Right ventricle myocardium inferior (tissue), 1 donor: ENCODE measurements at regions of chr7 and their contacts with region 1.

Region 1: DNA sequence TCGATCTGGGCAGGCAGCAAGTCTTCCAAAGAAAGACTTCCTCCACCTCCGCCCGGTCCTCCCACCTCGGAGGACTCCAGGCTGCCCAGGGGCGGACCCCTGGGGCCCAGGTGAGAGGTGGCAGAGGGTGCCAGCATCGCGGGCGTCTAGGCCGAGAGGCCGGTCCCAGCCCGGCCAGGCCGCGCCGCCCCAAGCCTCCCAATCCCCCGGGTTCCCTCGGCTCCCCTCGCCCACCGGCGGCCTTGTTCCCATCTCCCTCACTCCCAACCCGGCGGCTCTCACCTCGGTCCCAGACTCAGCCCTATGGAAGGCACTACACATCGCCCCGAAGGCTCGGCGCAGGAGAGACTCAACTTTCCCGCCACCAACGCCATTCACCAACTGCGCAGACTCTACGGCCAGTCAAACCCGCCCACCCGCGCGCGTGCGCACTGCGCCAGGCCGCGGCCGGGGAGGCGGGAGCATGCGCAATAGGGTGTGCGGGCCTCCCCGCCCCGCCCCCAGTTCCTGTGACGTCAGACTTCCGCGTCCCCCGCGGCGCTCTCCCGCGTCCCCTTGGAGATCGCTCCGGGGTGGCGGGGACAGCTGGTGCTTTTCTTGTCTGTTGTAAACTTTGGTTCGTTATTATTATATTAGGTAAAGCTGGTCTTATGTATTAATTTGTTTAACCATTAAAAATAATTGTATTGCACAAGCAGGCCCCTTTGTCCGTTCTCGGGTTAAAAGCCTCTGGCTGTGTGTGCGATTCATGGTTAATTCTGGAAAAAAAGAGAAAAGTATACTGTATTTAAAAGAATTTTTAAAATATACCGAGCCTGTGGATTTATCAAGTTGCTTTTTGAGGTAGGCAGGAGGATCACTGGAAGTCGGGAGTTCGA is at the start of gene XRCC2:
- DNase-seq: peak; percentile 95
- ATAC-seq: peak; percentile 99
- total RNA-seq, gene XRCC2: 0.65 TPM

Region 2: GRCh38 chr7:152336754-152337368 is 339.1 kb before region 1 on chr7:
- intact Hi-C with region 1: loop called (anchors 10 kb)
- DNase-seq: no peak
- ATAC-seq: no peak

Region 3: GRCh38 chr7:152463709-152464311 is 212.2 kb before region 1 on chr7:
- intact Hi-C with region 1: loop called (anchors 2 kb)
- DNase-seq: peak; percentile 100
- ATAC-seq: peak; percentile 96

Region 4: DNA sequence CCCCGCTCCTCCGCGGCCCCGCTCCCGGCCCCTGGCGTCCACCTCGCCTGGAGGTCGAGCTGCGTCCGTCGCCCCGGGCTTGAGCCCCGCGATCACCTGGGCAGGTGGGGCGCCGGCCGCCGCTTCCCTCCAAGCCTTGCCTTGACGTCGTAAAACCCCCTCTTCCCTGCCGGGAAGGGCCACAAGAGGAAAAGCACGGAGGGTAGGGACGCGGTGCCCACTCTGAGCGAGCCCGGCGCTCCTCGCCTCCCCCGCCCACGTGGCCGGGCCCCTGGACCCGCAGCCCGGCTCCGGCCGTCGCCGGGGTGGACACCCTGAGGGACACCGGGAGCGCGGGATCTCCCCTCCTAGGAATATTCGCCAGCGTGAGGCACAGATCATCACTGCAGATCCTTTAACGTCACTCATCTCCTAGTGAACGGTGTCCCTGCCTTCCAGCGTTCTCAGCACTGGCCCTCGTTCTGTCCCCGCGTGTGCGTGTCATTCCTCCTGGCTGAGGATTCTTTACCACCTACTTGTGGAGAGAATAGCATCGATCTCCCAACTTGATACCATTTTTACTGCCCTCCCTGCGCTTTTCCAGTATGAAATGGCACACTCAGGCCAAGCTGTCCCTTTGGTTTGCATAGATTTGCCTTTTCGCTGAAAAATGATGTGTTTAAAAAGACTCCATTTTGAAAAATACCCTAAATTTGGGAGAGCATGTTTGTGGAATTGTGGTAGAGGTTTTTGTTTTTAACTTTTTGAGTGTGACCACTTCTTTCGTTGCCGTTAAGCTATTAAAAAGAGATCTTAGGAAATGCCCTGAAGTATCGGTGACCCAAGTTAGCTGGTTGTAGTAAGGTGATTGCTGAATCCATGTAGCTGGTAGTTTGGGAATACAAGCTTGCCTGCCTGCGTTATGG is 84.2 kb after region 1 on chr7:
- intact Hi-C with region 1: loop called (anchors 2 kb)
- DNase-seq: no peak
- ATAC-seq: peak; percentile 37